A549 (cell line): ENCODE measurements at regions of chr11 and their contacts with region 1.

Region 1: GRCh38 chr11:71251761-71252443 is 475 bp downstream of the SHANK2 start:
- DNase-seq: peak; percentile 37 to 80
- ATAC-seq: peak; percentile 49 to 64
- H3K4me3 ChIP-seq: peak overlapping the region; percentile 99
- H3K27ac ChIP-seq: peak overlapping the region; percentile 99
- H3K4me1 ChIP-seq: peaks cover 32% of the 10 kb centered on the region
- CTCF ChIP-seq: peak; percentile 79
- EP300 ChIP-seq: no peak
- POLR2A ChIP-seq: no peak
- RAD21 ChIP-seq: peak; percentile 45 to 73; a peak in 4 of 5 replicates

Region 2: DNA sequence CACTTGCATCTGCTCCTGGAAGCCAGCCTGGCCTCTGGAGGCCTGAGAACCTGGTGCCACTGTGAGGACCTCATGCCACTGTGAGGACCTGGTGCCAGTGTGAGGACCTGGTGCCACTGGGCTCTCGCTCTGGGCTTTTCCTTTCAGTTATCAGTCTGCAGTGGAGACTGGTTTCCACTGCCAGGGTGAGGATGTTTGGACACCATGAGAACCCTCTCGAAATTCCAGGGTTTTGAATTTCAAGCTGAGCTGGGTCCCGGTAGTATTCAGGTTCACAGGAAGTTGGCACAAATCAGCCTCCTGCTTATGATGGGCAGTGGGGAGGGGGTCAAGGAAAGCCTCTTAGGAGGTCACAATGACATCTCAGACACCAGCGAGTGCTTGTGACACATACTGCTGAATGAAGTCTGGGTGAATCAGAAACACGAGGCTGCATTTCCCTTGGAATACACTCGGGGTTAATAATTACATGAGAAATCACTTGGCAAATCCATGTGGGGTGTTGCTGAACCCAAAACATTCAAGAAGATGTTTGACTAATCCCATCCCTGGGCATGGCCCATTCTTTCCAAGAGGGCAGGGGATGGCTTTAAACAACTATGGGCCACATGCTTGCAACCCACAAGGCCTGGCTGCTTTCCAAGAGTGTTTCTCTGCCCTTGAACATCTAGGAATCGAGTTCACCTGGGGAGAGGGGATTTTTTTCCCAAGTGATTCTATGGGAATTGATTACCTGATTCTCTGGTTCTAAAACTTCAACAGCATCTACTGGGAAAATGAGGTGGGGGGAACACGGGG is 1710.2 kb before region 1 on chr11:
- CTCF ChIA-PET with region 1: no interaction called
- POLR2A ChIA-PET with region 1: no interaction called
- DNase-seq: peak; percentile 68 to 80
- ATAC-seq: peak; percentile 68 to 70
- H3K4me3 ChIP-seq: no peak overlapping the region
- H3K27ac ChIP-seq: peak overlapping the region; percentile 66 to 85
- H3K4me1 ChIP-seq: peaks cover 31% of the 10 kb centered on the region
- CTCF ChIP-seq: no peak
- EP300 ChIP-seq: 0 out of 5 replicates have a peak, but pooled peaks have one; percentile 27 to 34
- POLR2A ChIP-seq: no peak
- RAD21 ChIP-seq: peak in 1 of 2 experiments; percentile 34; a peak in 2 of 5 replicates

Region 3: DNA sequence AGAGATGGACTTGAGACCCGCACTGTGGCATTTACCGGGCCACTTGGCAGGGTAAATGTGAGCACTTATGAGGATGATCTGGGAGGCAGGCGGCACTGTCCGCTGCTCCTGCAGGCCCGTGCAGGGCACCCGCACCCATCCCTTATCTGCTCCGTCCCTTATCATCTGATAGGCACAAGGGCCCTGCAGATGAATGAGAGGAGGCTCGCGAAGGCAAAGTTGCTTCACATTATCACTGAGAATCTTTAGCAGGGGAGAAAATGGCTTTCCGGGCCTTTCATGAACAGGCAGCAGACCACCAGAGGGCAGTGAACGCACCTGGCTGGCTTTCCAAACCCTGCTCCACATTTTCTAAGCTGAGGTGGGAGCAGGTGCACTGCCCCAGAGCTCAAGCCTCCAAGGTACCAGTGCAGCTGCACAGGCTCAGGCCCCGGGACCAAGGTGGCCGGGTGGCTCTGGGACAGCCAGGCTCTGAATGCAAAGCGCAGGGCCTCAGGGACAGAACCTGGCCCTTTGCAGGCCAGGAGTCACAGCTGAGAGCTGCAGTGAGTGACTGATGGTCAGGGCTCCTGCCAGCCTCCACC is 165.1 kb before region 1 on chr11:
- CTCF ChIA-PET with region 1: interaction called, 10 read pairs
- POLR2A ChIA-PET with region 1: no interaction called
- DNase-seq: peak; percentile 31 to 47
- ATAC-seq: peak; percentile 64 to 85; a peak in 5 of 6 replicates
- H3K4me3 ChIP-seq: no peak overlapping the region
- H3K27ac ChIP-seq: no peak overlapping the region
- H3K4me1 ChIP-seq: no peaks in the 10 kb centered on the region
- CTCF ChIP-seq: peak; percentile 62
- EP300 ChIP-seq: no peak
- POLR2A ChIP-seq: no peak
- RAD21 ChIP-seq: peak; percentile 67 to 71

Region 4: GRCh38 chr11:71267807-71268421 is 16.0 kb after region 1 on chr11:
- CTCF ChIA-PET with region 1: interaction called, 16 read pairs
- POLR2A ChIA-PET with region 1: no interaction called
- DNase-seq: no peak
- ATAC-seq: no peak
- H3K4me3 ChIP-seq: no peak overlapping the region
- H3K27ac ChIP-seq: peak overlapping the region in 1 of 2 experiments; percentile 38; a peak in 1 of 6 replicates
- H3K4me1 ChIP-seq: peaks cover 27% of the 10 kb centered on the region
- CTCF ChIP-seq: no peak
- EP300 ChIP-seq: no peak
- POLR2A ChIP-seq: no peak
- RAD21 ChIP-seq: no peak

Region 5: GRCh38 chr11:71329165-71329510 is 77.2 kb after region 1 on chr11:
- CTCF ChIA-PET with region 1: interaction called, 16 read pairs
- POLR2A ChIA-PET with region 1: interaction called, 5 read pairs
- DNase-seq: no peak
- ATAC-seq: no peak
- H3K4me3 ChIP-seq: no peak overlapping the region
- H3K27ac ChIP-seq: no peak overlapping the region
- H3K4me1 ChIP-seq: no peaks in the 10 kb centered on the region
- CTCF ChIP-seq: no peak; the same call in 2 of the 3 replicates
- EP300 ChIP-seq: no peak
- POLR2A ChIP-seq: no peak
- RAD21 ChIP-seq: no peak

Region 6: DNA sequence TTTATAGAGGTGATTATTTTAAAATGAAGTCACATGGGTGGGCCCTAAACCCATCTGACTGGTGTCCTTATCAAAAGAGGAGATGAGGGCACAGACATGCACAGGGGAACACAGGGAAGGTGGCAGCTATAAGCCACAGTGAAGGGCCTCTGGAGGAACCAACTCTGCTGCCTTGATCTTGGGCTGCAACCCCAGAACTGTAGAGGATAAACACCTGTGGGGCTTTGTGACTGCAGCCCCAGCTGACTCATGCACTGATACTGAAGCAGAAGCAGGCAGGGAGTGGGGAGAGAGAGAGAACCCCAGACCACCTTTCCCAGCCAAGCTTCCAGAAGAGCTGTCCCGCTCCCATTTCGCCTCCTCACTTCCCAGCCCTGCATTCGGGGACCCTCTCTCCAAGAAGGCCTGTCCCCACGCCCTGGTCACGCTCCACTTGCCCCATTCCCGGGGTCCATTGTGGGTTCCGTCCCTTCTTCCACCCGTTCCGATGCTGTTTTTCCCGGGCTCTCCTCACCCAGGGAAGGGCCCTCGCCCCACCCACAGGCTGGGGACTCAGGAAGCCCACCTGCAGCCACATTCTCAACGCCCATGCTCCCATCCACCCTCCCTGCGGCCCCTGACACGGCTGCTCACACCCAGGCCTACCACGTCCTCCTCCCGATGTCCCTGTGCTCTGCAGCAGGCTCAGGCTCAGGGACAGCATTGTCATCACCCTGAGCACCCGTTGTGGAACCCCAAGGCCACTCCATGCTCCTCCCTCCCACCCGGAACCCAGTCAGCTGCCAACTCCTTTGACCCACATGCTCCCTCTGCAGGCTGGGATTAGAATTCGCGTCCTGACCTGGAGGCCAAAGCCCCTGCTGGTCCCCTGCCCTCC is 91.3 kb after region 1 on chr11:
- CTCF ChIA-PET with region 1: interaction called, 39 read pairs
- POLR2A ChIA-PET with region 1: interaction called, 3 read pairs
- DNase-seq: peak; percentile 60 to 82
- ATAC-seq: peak; percentile 83 to 93
- H3K4me3 ChIP-seq: no peak overlapping the region
- H3K27ac ChIP-seq: peak overlapping the region; percentile 44 to 68
- H3K4me1 ChIP-seq: peaks cover 7% of the 10 kb centered on the region
- CTCF ChIP-seq: peak; percentile 69
- EP300 ChIP-seq: no peak
- POLR2A ChIP-seq: no peak
- RAD21 ChIP-seq: peak; percentile 79 to 82